WTC11 (cell line): ENCODE measurements at regions of chr19 and their contacts with region 1.

Region 1: GRCh38 chr19:3762501-3763459 is at the start of gene MRPL54:
- DNase-seq: peak; percentile 99
- ATAC-seq: peak; percentile 91
- H3K4me3 Mint-ChIP-seq: peak within 1 kb of the TSS; percentile 97
- H3K27ac Mint-ChIP-seq: peak within 1 kb of the TSS; percentile 95
- H3K4me1 Mint-ChIP-seq: peaks cover 8% of the 10 kb centered on the region
- H3K27me3 Mint-ChIP-seq: peaks cover 3% of the 10 kb centered on the region; the same call in 1 of the 2 replicates
- CTCF ChIP-seq: no peak
- total RNA-seq, gene MRPL54: 60.9 to 65.3 TPM (median 62.3 TPM) in 3 replicates

Region 2: GRCh38 chr19:3721131-3721886 is 41.5 kb before region 1 on chr19:
- CTCF ChIA-PET with region 1: interaction called, 11 read pairs
- POLR2A ChIA-PET with region 1: no interaction called
- DNase-seq: peak; percentile 99
- ATAC-seq: peak; percentile 69
- H3K4me3 Mint-ChIP-seq: peak overlapping the region; percentile 83
- H3K27ac Mint-ChIP-seq: no peak overlapping the region
- H3K4me1 Mint-ChIP-seq: peaks cover 16% of the 10 kb centered on the region
- H3K27me3 Mint-ChIP-seq: no peaks in the 10 kb centered on the region
- CTCF ChIP-seq: no peak

Region 3: DNA sequence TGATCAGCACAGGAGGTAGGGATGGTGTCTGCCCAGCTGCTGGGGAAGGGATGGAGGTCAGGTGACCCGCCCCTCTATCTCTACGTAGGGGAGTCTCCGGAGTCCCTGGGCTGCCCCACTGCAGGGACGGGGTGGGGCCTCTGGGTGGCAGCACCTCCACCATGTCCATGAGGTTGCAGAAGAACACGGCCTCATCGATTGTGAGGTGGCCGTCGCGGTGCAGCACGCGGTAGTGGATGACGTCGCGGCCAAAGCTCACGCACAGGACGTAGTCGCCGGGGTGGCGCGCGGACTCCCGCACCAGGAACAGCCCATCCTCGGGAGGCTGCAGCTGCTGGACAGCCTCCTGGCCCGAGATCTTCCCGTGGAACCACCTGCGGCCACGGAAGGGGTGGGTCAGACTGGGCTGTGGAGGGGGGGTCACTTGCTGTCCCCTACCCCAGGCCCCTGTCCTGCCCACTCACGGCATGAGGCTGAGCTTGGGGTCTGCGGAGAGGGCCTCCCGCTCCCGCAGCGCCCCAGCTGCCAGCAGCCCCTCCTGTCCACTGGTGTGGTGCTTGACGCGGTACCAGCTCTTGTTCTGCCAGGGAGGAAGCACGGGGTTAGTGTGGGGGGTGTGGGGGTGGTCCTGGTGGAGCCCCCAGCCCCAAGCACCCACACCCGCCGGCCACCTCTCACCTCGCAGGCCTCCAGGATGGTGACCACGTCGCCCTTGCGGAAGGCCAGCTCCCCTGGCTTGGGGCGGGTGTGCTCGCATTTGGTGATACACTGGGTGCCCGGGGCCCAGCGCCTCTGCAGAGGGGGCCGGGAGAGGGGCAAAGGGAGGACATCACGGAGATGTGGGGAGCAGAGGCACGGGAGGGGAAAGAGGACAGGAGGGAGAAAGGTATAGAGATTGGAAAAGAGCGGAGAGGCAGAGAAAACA is 21.1 kb after region 1 on chr19:
- CTCF ChIA-PET with region 1: interaction called, 17 read pairs
- POLR2A ChIA-PET with region 1: no interaction called
- DNase-seq: peak; percentile 75
- ATAC-seq: peak; percentile 80
- H3K4me3 Mint-ChIP-seq: peak overlapping the region; percentile 75
- H3K27ac Mint-ChIP-seq: no peak overlapping the region
- H3K4me1 Mint-ChIP-seq: peaks cover 7% of the 10 kb centered on the region
- H3K27me3 Mint-ChIP-seq: peaks cover 17% of the 10 kb centered on the region
- CTCF ChIP-seq: peak; percentile 66

Region 4: GRCh38 chr19:3849094-3849493 is 86.3 kb after region 1 on chr19:
- CTCF ChIA-PET with region 1: interaction called, 18 read pairs
- POLR2A ChIA-PET with region 1: no interaction called
- DNase-seq: peak; percentile 33
- ATAC-seq: peak; percentile 75
- H3K4me3 Mint-ChIP-seq: no peak overlapping the region
- H3K27ac Mint-ChIP-seq: no peak overlapping the region
- H3K4me1 Mint-ChIP-seq: no peaks in the 10 kb centered on the region
- H3K27me3 Mint-ChIP-seq: peaks cover 11% of the 10 kb centered on the region
- CTCF ChIP-seq: no peak